Common myeloid progenitor, CD34-positive (primary cell): ENCODE measurements at regions of chr4 and their contacts with region 1.

Region 1: DNA sequence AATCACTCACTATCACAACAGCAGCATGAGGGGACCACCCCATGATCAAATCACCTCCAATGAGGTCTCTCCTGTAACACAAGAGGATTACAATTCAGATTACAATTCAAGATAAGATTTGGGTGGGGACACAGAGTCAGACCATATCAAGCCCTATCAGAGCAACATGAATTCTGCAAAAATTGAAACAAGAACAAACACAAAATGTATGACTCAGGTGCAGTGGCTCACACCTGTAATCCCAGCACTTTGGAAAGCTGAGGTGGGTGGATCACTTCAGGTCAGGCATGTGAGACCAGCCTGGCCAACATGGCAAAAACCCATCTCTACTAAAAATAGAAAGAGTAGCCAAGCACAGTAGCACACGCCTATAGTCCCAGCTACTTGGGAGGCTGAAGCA is 13.4 kb upstream of the HPSE start:
- DNase-seq: no peak
- H3K4me3 ChIP-seq: no peak overlapping the region
- H3K27ac ChIP-seq: no peak overlapping the region
- H3K4me1 ChIP-seq: peaks cover 0 to 7% (median 0%) of the 10 kb centered on the region in 4 experiments
- H3K27me3 ChIP-seq: no peaks in the 10 kb centered on the region

Region 2: GRCh38 chr4:83362492-83363329 is 14.6 kb after region 1 on chr4:
- CTCF ChIA-PET with region 1: interaction called, 15 read pairs
- POLR2A ChIA-PET with region 1: no interaction called
- DNase-seq: peak; percentile 48 to 68 (median 68)
- H3K4me3 ChIP-seq: no peak overlapping the region
- H3K27ac ChIP-seq: no peak overlapping the region
- H3K4me1 ChIP-seq: peaks cover 0 to 22% (median 15%) of the 10 kb centered on the region in 4 experiments
- H3K27me3 ChIP-seq: no peaks in the 10 kb centered on the region